A673 (cell line): ENCODE measurements at regions of chr10 and their contacts with region 1.

Region 1: GRCh38 chr10:65083222-65083621 is 1562.0 kb downstream of the REEP3 start:
- DNase-seq: no peak
- H3K4me3 ChIP-seq: no peak overlapping the region
- H3K27ac ChIP-seq: no peak overlapping the region
- H3K4me1 ChIP-seq: no peaks in the 10 kb centered on the region
- H3K27me3 ChIP-seq: no peaks in the 10 kb centered on the region
- CTCF ChIP-seq: no peak

Region 2: DNA sequence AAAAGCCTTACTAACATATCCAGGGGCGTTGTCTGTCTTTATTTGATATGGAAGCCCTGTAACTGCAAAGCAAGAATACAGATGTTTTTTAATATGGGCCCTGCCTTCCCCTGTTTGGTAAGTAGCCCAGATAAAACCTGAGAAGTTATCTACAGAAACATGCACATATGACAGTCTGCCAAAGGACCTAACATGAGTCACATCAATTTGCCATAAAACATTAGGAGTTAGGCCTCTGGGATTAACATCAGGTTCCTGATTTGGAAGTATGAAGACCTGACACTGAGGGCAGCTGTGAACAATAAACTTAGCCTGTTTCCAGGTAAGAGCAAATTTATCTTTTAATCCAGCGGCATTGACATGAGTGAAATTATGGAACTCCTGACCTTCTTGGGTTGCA is 26.8 kb after region 1 on chr10:
- CTCF ChIA-PET with region 1: no interaction called
- POLR2A ChIA-PET with region 1: no interaction called
- intact Hi-C with region 1: no loop called
- DNase-seq: no peak
- H3K4me3 ChIP-seq: no peak overlapping the region
- H3K27ac ChIP-seq: no peak overlapping the region
- H3K4me1 ChIP-seq: no peaks in the 10 kb centered on the region
- H3K27me3 ChIP-seq: no peaks in the 10 kb centered on the region
- CTCF ChIP-seq: no peak

Region 3: DNA sequence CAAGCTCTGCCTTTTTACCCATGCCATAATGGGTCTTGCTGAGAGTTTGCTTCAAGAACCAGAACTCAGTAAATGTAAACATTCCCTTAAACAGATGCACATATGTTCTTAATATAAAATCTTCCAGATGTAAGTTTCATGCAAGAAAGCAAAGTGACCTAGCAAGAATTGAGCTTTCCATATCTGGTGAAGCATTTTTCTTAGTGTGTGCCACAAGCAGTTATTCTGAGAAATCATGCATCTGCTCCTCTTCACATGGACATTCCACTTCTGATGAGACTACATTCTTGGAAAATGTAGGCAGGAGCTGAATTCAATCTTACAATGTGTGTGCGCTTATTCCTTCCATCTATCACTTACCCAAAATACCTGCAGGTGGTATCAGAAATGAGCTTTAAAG is 1614.8 kb after region 1 on chr10:
- CTCF ChIA-PET with region 1: no interaction called
- POLR2A ChIA-PET with region 1: interaction called, 12 read pairs
- intact Hi-C with region 1: no loop called
- DNase-seq: no peak
- H3K4me3 ChIP-seq: no peak overlapping the region
- H3K27ac ChIP-seq: no peak overlapping the region
- H3K4me1 ChIP-seq: no peaks in the 10 kb centered on the region
- H3K27me3 ChIP-seq: no peaks in the 10 kb centered on the region
- CTCF ChIP-seq: no peak